ENCODE measurements at regions of chr7 and their contacts with region 1.

Region 1: DNA sequence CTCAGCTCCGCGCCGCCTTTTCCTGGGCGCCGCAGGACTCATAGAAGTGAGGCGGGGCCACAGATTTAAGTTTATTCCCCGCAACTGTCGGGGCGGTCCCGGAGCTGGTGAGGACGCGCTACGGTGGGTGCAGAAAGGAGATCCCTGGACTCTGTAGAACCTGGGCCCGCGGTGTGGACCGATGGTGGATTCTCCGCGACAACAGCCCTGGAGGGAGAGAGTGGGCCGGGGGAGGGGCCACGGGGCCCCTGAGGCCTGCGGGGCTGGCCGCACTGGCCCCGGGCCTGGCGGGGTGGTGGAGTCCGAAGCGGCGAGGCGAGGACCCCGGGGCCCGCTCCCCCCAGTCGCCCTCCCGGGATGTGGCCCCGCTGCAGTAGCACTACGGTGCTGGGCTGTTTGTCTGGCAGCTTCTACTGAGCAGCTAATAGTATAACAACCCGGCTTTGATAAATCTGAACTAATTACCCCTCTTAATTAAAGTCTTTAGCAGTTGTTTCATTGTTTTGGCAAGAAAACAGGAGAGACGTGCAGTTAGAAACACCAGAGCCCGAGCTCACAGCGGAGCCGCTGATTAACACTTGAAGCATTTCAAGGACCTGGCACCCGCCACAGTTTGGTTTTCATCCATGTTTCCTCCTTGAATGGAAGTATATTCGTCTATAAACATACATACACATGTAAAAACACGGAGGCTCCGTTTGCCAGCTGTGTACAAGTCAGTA is 4.2 kb downstream of the FEZF1 start:
- DNase-seq: no peak
- H3K4me3 Mint-ChIP-seq: no peak overlapping the region
- H3K27ac Mint-ChIP-seq: no peak overlapping the region
- H3K4me1 Mint-ChIP-seq: no peaks in the 10 kb centered on the region
- H3K27me3 Mint-ChIP-seq: peaks cover 65% of the 10 kb centered on the region

Region 2: GRCh38 chr7:122143751-122144711 is 156.3 kb before region 1 on chr7 and contains the start of gene AASS:
- intact Hi-C with region 1: no loop called
- DNase-seq: peak; percentile 93
- H3K4me3 Mint-ChIP-seq: peak within 1 kb of the TSS; percentile 93
- H3K27ac Mint-ChIP-seq: peak within 1 kb of the TSS; percentile 56
- H3K4me1 Mint-ChIP-seq: peaks cover 12% of the 10 kb centered on the region
- H3K27me3 Mint-ChIP-seq: peaks cover 33% of the 10 kb centered on the region
- total RNA-seq, gene AASS: 0.47 and 1.3 TPM in 2 replicates

Region 3: GRCh38 chr7:122315507-122316466 is 15.4 kb after region 1 on chr7:
- intact Hi-C with region 1: loop called (anchors 2 kb)
- DNase-seq: no peak
- H3K4me3 Mint-ChIP-seq: no peak overlapping the region
- H3K27ac Mint-ChIP-seq: no peak overlapping the region
- H3K4me1 Mint-ChIP-seq: no peaks in the 10 kb centered on the region
- H3K27me3 Mint-ChIP-seq: peaks cover 64% of the 10 kb centered on the region